ENCODE measurements at regions of chr2 and their contacts with region 1.

Region 1: GRCh38 chr2:78304678-78305077 is 720.8 kb upstream of the REG3G start:
- DNase-seq: no peak
- ATAC-seq: no peak; the same call in 2 of the 3 replicates
- H3K4me3 ChIP-seq: no peak overlapping the region
- H3K27ac ChIP-seq: no peak overlapping the region
- H3K4me1 ChIP-seq: no peaks in the 10 kb centered on the region
- H3K27me3 ChIP-seq: no peaks in the 10 kb centered on the region
- CTCF ChIP-seq: no peak
- EP300 ChIP-seq: no peak
- POLR2A ChIP-seq: no peak
- RAD21 ChIP-seq: no peak

Region 2: GRCh38 chr2:78293768-78294167 is 10.9 kb before region 1 on chr2:
- CTCF ChIA-PET with region 1: interaction called, 5 read pairs
- POLR2A ChIA-PET with region 1: no interaction called
- RAD21 ChIA-PET with region 1: interaction called, 6 read pairs
- SMC1A ChIA-PET with region 1: interaction called, 15 read pairs
- in situ Hi-C with region 1: no loop called
- intact Hi-C with region 1: no loop called
- DNase-seq: no peak
- ATAC-seq: peak; percentile 81
- H3K4me3 ChIP-seq: no peak overlapping the region
- H3K27ac ChIP-seq: no peak overlapping the region
- H3K4me1 ChIP-seq: no peaks in the 10 kb centered on the region
- H3K27me3 ChIP-seq: no peaks in the 10 kb centered on the region
- CTCF ChIP-seq: no peak
- EP300 ChIP-seq: no peak
- POLR2A ChIP-seq: no peak
- RAD21 ChIP-seq: no peak

Measured in GM12878 (cell line).